PC-3 (cell line): ENCODE measurements at regions of chr5 and their contacts with region 1.

Region 1: DNA sequence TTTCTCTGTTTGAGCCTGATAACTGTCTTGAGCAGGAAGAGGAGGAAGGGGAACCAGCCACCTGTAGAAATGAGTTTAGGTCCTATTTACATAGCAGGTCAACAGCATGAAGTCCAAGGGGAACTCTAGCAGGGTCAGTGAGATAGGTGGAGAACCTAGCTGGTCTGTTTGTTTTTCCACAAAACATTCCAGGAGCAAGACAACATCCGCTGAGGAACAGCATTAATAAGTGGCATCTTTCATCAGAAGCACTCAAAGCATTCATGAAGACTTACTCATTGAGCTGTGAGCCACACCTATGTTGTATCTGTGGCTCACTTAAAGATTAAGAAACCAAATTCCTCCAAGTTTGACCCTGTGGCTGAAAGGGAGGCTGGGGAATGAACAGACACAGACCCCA is 115.9 kb downstream of the ACTBL2 start:
- DNase-seq: peak; percentile 86
- ATAC-seq: peak; percentile 95
- H3K4me3 ChIP-seq: no peak overlapping the region
- H3K27ac ChIP-seq: peak overlapping the region; percentile 80
- H3K4me1 ChIP-seq: peaks cover 34% of the 10 kb centered on the region
- H3K27me3 ChIP-seq: no peaks in the 10 kb centered on the region
- CTCF ChIP-seq: no peak

Region 2: DNA sequence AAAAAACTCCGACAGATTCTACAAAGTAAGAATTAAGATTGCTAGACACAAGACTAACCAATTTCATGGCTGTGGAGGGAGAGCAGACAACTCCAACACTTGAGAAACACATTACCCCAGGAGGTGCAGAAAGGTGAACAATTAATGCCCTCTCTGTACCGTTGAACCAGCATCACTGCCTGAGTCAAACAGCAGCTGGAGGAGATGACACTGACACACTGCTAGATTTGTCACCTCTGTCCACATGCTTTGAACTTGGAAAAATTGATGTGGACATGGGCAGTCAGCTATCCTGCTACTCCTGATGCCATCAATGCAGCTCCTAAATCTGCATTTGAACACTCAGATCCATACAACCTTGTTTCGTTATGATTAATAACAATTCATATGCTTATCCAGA is 141.2 kb before region 1 on chr5:
- CTCF ChIA-PET with region 1: no interaction called
- POLR2A ChIA-PET with region 1: no interaction called
- intact Hi-C with region 1: no loop called
- DNase-seq: no peak
- ATAC-seq: no peak
- H3K4me3 ChIP-seq: no peak overlapping the region
- H3K27ac ChIP-seq: no peak overlapping the region
- H3K4me1 ChIP-seq: no peaks in the 10 kb centered on the region
- H3K27me3 ChIP-seq: no peaks in the 10 kb centered on the region
- CTCF ChIP-seq: no peak

Region 3: DNA sequence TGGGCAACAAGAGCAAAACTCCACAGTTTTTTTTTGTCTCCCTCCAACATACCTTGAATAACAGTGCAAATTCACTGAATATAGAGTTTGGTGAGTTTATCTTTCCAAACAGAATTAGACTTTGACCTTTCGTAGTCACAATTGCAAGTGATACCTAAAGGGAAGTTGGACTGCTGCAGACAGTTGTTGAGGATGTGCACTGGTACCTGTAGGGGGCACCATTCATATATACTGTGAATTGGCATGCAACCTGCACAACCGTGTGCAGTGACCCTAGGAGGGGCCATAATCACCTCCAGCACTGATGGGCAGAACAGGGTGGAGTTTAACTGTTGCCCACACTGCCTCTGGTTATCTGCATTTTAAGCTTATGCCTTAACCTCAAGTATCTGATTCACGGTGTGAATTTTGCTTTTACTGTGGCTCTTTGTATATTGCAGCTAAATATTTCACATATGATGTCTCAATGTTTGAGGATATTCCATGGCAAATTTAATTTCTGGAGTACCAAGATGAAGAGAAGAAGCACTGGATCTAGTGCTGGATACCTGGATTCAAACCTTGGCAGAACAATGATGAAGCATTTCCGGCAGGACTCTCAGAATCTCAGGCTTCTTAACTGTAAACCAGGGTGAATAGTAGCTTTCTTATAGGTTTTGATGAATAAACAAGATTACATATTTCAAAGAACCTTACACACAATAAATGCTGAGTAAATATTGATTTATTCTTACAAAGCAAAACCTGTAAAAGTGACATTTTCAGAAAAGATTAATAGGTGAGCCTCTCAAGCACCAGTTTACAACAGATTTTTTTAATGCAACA is 28.5 kb before region 1 on chr5:
- CTCF ChIA-PET with region 1: no interaction called
- POLR2A ChIA-PET with region 1: no interaction called
- intact Hi-C with region 1: loop called (anchors 1 kb)
- DNase-seq: peak; percentile 62
- ATAC-seq: peak; percentile 67
- H3K4me3 ChIP-seq: no peak overlapping the region
- H3K27ac ChIP-seq: peak overlapping the region; percentile 67
- H3K4me1 ChIP-seq: peaks cover 49% of the 10 kb centered on the region
- H3K27me3 ChIP-seq: no peaks in the 10 kb centered on the region
- CTCF ChIP-seq: peak; percentile 59

Region 4: GRCh38 chr5:57383093-57383861 is 16.5 kb after region 1 on chr5:
- CTCF ChIA-PET with region 1: no interaction called
- POLR2A ChIA-PET with region 1: interaction called, 6 read pairs
- intact Hi-C with region 1: loop called (anchors 1 kb)
- DNase-seq: peak; percentile 87
- ATAC-seq: peak; percentile 95
- H3K4me3 ChIP-seq: peak overlapping the region; percentile 50; the same call in 1 of the 2 replicates
- H3K27ac ChIP-seq: peak overlapping the region; percentile 89
- H3K4me1 ChIP-seq: peaks cover 14% of the 10 kb centered on the region
- H3K27me3 ChIP-seq: no peaks in the 10 kb centered on the region
- CTCF ChIP-seq: peak; percentile 47

Region 5: DNA sequence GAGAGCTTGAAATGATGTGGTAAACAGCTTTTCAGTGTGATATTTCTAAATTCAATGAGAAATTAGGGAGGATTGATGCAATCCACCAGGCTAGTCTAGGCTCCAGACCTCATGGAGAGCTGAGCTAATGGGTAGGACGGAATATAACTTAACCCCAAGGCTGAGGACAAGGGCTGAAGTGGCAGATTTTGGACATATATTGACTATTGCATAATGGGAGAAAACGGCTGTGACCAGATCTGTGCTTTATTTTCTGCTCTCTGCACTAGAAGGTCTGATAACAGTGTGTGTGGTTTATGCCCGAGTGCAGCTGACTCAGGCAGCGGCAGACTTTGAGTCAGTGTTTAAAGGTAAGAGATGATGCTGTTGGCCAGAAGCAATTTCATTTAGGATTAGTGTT is 45.2 kb after region 1 on chr5:
- CTCF ChIA-PET with region 1: no interaction called
- POLR2A ChIA-PET with region 1: interaction called, 10 read pairs
- intact Hi-C with region 1: no loop called
- DNase-seq: peak; percentile 58
- ATAC-seq: peak; percentile 81
- H3K4me3 ChIP-seq: no peak overlapping the region
- H3K27ac ChIP-seq: peak overlapping the region; percentile 14
- H3K4me1 ChIP-seq: peaks cover 22% of the 10 kb centered on the region
- H3K27me3 ChIP-seq: no peaks in the 10 kb centered on the region
- CTCF ChIP-seq: no peak

Region 6: GRCh38 chr5:57456531-57457135 is 89.9 kb after region 1 on chr5:
- CTCF ChIA-PET with region 1: no interaction called
- POLR2A ChIA-PET with region 1: interaction called, 12 read pairs
- intact Hi-C with region 1: no loop called
- DNase-seq: no peak
- ATAC-seq: no peak
- H3K4me3 ChIP-seq: no peak overlapping the region
- H3K27ac ChIP-seq: no peak overlapping the region
- H3K4me1 ChIP-seq: no peaks in the 10 kb centered on the region
- H3K27me3 ChIP-seq: no peaks in the 10 kb centered on the region
- CTCF ChIP-seq: no peak